PC-9 (cell line): ENCODE measurements at regions of chr20 and their contacts with region 1.

Region 1: DNA sequence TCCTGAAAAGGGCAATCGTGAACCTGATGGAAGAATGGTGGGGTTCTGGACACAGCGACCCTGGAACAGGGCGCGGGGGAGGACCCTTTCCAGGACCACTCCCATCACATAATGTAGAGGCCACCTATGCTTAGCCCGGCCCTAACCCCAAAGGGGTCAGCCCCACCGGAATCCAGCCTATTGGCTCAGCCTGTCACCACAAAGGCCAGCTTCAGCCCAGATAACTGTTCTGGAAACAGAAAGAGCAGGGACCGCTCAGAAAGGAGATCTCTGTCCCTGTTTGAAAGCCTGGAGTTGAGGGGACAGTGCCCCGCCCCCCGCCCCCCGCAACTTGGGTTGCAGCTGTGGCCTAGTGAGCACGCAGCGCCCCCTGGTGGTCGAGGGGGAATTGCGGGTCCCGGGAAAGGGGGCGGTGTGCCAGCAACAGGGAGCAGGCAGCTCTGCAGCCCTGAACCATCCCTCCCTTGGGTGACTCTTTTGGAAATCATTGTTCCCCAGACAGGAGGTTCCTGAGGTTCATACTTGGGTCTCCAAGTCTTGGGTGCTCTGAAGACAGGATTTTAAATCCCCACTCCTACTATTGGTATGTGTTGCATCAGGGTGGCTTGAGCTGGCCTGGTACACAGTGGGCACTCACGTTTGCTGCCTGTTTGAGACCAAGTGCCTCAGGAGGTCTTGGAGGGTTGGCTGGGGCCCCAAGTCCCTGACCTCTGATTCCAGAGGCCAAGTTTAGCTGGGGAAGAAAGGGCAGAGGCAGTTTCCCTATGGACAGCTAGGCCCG is 1.5 kb downstream of the SIGLEC1 start:
- DNase-seq: peak in 1 of 2 experiments; percentile 70
- H3K4me3 ChIP-seq: no peak overlapping the region
- H3K27ac ChIP-seq: no peak overlapping the region
- H3K4me1 ChIP-seq: no peaks in the 10 kb centered on the region
- H3K27me3 ChIP-seq: no peaks in the 10 kb centered on the region
- CTCF ChIP-seq: peak; percentile 96

Region 2: GRCh38 chr20:3563548-3564177 is 147.2 kb before region 1 on chr20:
- CTCF ChIA-PET with region 1: interaction called, 14 read pairs
- POLR2A ChIA-PET with region 1: no interaction called
- intact Hi-C with region 1: loop called (anchors 1 kb)
- DNase-seq: peak in 1 of 2 experiments; percentile 15
- H3K4me3 ChIP-seq: no peak overlapping the region
- H3K27ac ChIP-seq: no peak overlapping the region
- H3K4me1 ChIP-seq: no peaks in the 10 kb centered on the region
- H3K27me3 ChIP-seq: no peaks in the 10 kb centered on the region
- CTCF ChIP-seq: peak; percentile 80

Region 3: GRCh38 chr20:3846740-3847428 is 136.0 kb after region 1 on chr20 and contains the start of gene MAVS:
- CTCF ChIA-PET with region 1: no interaction called
- POLR2A ChIA-PET with region 1: no interaction called
- intact Hi-C with region 1: loop called (anchors 10 kb)
- DNase-seq: peak; percentile 66 to 91
- H3K4me3 ChIP-seq: peak within 1 kb of the TSS; percentile 100
- H3K27ac ChIP-seq: peak within 1 kb of the TSS; percentile 88
- H3K4me1 ChIP-seq: peaks cover 54% of the 10 kb centered on the region
- H3K27me3 ChIP-seq: no peaks in the 10 kb centered on the region
- CTCF ChIP-seq: no peak
- total RNA-seq, gene MAVS: 53.6 and 61.3 TPM in 2 replicates